ENCODE measurements at regions of chr18 and their contacts with region 1.

Region 1: GRCh38 chr18:22128954-22129353 is 40.4 kb upstream of the GATA6 start:
- DNase-seq: no peak
- ATAC-seq: no peak
- H3K4me3 Mint-ChIP-seq: no peak overlapping the region
- H3K27ac Mint-ChIP-seq: no peak overlapping the region
- H3K4me1 Mint-ChIP-seq: no peaks in the 10 kb centered on the region
- H3K27me3 Mint-ChIP-seq: no peaks in the 10 kb centered on the region

Region 2: DNA sequence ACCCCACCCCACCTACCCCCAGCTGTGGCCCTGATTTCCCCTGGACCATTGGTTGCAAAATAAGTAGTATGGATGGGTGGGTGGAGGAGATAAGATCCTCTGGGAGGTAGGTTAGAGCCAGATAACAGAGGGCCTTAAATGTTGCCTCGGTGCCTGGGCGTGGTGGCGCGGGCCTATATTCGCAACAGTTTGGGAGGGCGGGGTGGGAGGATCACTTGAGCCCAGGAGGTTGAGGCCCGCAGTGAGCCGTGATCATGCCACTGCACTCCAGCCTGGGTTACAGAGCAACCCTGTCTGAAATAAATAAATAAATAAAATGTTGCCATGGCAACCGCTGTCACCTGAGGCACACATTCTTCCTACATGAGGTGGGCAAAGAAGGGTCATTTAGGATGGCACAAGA is 62.9 kb before region 1 on chr18:
- CTCF ChIA-PET with region 1: no interaction called
- POLR2A ChIA-PET with region 1: no interaction called
- intact Hi-C with region 1: no loop called
- DNase-seq: no peak
- ATAC-seq: no peak
- H3K4me3 Mint-ChIP-seq: no peak overlapping the region
- H3K27ac Mint-ChIP-seq: no peak overlapping the region
- H3K4me1 Mint-ChIP-seq: no peaks in the 10 kb centered on the region
- H3K27me3 Mint-ChIP-seq: peaks cover 3% of the 10 kb centered on the region

Region 3: GRCh38 chr18:22113144-22113830 is 15.7 kb before region 1 on chr18:
- CTCF ChIA-PET with region 1: no interaction called
- POLR2A ChIA-PET with region 1: no interaction called
- intact Hi-C with region 1: no loop called
- DNase-seq: no peak
- ATAC-seq: no peak
- H3K4me3 Mint-ChIP-seq: no peak overlapping the region
- H3K27ac Mint-ChIP-seq: no peak overlapping the region
- H3K4me1 Mint-ChIP-seq: no peaks in the 10 kb centered on the region
- H3K27me3 Mint-ChIP-seq: no peaks in the 10 kb centered on the region

Region 4: GRCh38 chr18:22250591-22250996 is 121.6 kb after region 1 on chr18:
- CTCF ChIA-PET with region 1: no interaction called
- POLR2A ChIA-PET with region 1: no interaction called
- intact Hi-C with region 1: loop called in 1 of 2 experiments (anchors 10 kb)
- DNase-seq: no peak
- ATAC-seq: no peak
- H3K4me3 Mint-ChIP-seq: no peak overlapping the region
- H3K27ac Mint-ChIP-seq: no peak overlapping the region
- H3K4me1 Mint-ChIP-seq: no peaks in the 10 kb centered on the region
- H3K27me3 Mint-ChIP-seq: no peaks in the 10 kb centered on the region

Region 5: DNA sequence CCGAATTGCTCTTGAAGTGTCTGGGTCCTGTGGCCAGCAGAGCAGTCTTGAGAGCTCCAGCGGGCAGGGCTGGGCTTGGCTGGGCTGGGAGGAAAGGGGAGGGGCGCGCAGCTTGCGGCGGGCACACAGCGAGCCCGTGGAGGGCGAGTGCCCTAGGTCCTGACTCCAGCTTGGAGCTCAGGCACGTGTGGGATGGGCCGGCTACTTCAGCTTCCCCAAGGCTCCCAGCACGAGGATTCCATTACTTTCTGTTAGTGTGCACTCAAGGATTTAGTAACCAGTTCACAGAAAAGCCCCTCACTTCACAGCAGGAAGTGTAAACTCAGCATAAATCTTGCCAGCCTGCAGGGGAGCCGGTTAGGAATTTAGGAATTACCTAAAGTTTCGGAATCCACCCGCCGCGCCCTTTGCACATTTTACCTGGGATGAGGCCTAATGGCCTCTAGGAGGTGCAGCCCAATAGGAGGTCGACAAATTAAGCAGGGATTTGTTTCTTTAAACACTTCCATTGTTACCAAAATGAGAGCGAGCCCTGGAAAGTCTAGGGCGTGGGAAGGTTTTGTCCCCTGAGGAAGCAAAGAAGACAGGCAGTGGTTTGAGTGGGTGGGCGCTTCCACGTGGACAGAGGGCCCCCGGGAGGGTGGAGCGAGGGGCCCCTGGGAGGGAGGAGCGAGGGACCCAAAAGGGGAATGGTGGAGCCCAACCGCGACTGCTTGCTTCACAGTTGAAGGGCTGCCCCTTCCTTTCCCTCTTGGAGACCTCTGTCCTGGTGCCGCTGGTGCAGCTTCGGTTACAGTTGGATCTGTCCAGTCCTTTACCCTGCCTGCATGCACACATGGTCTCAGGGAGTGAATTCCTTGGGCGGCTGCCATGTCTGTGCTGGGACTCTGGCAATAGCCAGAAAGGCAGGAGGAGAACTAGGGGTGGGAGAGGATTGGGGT is 195.5 kb after region 1 on chr18:
- CTCF ChIA-PET with region 1: no interaction called
- POLR2A ChIA-PET with region 1: no interaction called
- intact Hi-C with region 1: no loop called
- DNase-seq: no peak
- ATAC-seq: no peak
- H3K4me3 Mint-ChIP-seq: no peak overlapping the region
- H3K27ac Mint-ChIP-seq: no peak overlapping the region
- H3K4me1 Mint-ChIP-seq: no peaks in the 10 kb centered on the region
- H3K27me3 Mint-ChIP-seq: no peaks in the 10 kb centered on the region